Heart left ventricle (tissue), 16 donors: ENCODE measurements at regions of chr15 and their contacts with region 1.

Region 1: GRCh38 chr15:95365511-95366107 is 964.9 kb upstream of the NR2F2 start:
- DNase-seq: peak in 4 of 5 donors; percentile 29 to 60 (median 44)
- ATAC-seq: peak; percentile 80 to 97 (median 90)
- H3K4me3 ChIP-seq: no peak overlapping the region
- H3K27ac ChIP-seq: peak overlapping the region in 10 of 12 donors; percentile 9 to 73 (median 41)
- H3K4me1 ChIP-seq: peaks cover 0 to 24% (median 2%) of the 10 kb centered on the region in 12 donors
- H3K27me3 ChIP-seq: peaks cover 0 to 3% (median 0%) of the 10 kb centered on the region in 9 donors
- CTCF ChIP-seq: no peak
- POLR2A ChIP-seq: no peak

Region 2: GRCh38 chr15:95202569-95203349 is 162.8 kb before region 1 on chr15:
- intact Hi-C with region 1: no loop called
- DNase-seq: no peak
- ATAC-seq: no peak
- H3K4me3 ChIP-seq: no peak overlapping the region
- H3K27ac ChIP-seq: no peak overlapping the region
- H3K4me1 ChIP-seq: no peaks in the 10 kb centered on the region
- H3K27me3 ChIP-seq: no peaks in the 10 kb centered on the region
- CTCF ChIP-seq: no peak
- POLR2A ChIP-seq: no peak

Region 3: GRCh38 chr15:95304151-95304946 is 61.3 kb before region 1 on chr15:
- intact Hi-C with region 1: loop called in 1 of 10 experiments (anchors 5 kb)
- DNase-seq: peak in 2 of 5 donors; percentile 32 to 48
- ATAC-seq: peak; percentile 57 to 78 (median 70)
- H3K4me3 ChIP-seq: peak overlapping the region in 3 of 12 donors; percentile 6 to 14 (median 11)
- H3K27ac ChIP-seq: peak overlapping the region; percentile 30 to 92 (median 72)
- H3K4me1 ChIP-seq: peaks cover 0 to 36% (median 18%) of the 10 kb centered on the region in 12 donors
- H3K27me3 ChIP-seq: no peaks in the 10 kb centered on the region
- CTCF ChIP-seq: no peak
- POLR2A ChIP-seq: peak in 1 of 2 donors; percentile 22

Region 4: GRCh38 chr15:95326431-95327182 is 39.0 kb before region 1 on chr15:
- intact Hi-C with region 1: loop called in 1 of 10 experiments (anchors 2 kb)
- DNase-seq: peak in 3 of 5 donors; percentile 20 to 56 (median 28)
- ATAC-seq: peak; percentile 35 to 62 (median 47)
- H3K4me3 ChIP-seq: peak overlapping the region; percentile 21 to 69 (median 55)
- H3K27ac ChIP-seq: peak overlapping the region; percentile 54 to 93 (median 86)
- H3K4me1 ChIP-seq: peaks cover 0 to 16% (median 0%) of the 10 kb centered on the region in 12 donors
- H3K27me3 ChIP-seq: peaks cover 0 to 14% (median 5%) of the 10 kb centered on the region in 9 donors
- CTCF ChIP-seq: no peak
- POLR2A ChIP-seq: no peak

Region 5: DNA sequence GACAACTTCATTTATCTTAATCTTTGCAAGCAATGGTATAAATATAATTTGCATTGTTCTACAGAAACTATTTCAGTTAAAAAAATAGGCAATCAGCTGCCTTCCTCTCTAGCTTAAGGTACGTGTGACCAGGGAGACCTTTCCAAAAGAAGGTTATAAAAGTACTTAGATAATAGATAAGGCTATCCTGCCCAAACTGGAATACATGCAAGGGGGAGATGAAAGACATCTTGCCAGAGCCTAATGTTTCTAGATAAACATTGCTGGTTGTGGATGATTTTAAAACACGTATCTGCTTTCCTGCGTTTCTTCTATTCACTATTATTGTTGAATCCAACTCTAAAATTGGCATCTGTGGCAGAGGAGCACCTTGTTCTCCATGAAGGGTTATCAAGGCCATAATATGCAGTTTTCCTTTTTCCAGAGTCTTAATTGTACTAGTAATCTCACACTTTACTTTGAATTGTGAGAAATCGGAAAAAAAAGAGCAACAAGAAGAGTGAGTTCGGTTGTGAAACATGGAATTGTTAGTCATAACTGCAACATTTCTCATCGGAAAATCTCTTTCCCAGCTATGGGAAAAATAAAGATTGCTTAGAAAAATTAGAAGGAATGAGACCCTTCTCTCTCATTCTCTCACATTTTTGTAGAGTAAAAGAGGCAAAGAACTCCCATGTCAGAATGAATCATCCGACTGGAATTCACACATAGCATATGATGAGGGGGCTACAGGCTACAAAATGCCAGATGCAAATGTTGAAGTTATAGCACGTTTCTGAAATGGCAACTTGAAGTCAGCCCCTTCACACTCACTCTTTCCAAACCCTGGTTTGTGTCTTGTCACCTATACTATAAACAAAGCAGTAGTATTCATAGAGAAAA is 28.8 kb after region 1 on chr15:
- intact Hi-C with region 1: no loop called
- DNase-seq: no peak
- ATAC-seq: no peak
- H3K4me3 ChIP-seq: peak overlapping the region in 1 of 12 donors; percentile 15
- H3K27ac ChIP-seq: peak overlapping the region in 4 of 12 donors; percentile 2 to 57 (median 33)
- H3K4me1 ChIP-seq: peaks cover 0 to 16% (median 0%) of the 10 kb centered on the region in 12 donors
- H3K27me3 ChIP-seq: no peaks in the 10 kb centered on the region
- CTCF ChIP-seq: no peak
- POLR2A ChIP-seq: no peak

Region 6: GRCh38 chr15:95429345-95429744 is 63.7 kb after region 1 on chr15:
- intact Hi-C with region 1: no loop called
- DNase-seq: no peak
- ATAC-seq: peak in 1 of 4 donors; percentile 9
- H3K4me3 ChIP-seq: no peak overlapping the region
- H3K27ac ChIP-seq: no peak overlapping the region
- H3K4me1 ChIP-seq: no peaks in the 10 kb centered on the region
- H3K27me3 ChIP-seq: no peaks in the 10 kb centered on the region
- CTCF ChIP-seq: no peak
- POLR2A ChIP-seq: no peak